ENCODE measurements at regions of chr13 and their contacts with region 1.

Region 1: DNA sequence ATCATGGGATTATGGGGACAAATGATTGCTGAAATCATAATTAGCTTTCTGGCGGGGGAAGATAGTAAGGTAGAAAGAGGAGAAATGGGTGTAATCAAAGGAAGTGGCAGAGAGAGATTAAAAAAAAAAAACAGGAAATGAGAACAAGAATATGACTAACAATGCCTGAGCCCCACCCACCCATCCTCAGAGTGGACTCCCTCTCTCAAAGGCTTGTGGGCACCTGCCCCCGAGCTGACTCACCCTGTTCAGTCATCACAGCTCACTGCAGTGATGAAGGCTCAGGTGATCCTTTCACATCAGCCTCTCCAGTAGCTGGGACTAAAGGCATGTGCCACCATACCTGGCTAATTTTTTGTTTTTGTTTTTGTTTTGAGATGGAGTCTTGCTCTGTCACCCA is 26.4 kb upstream of the TPT1 start:
- DNase-seq: peak; percentile 86
- H3K4me3 Mint-ChIP-seq: peak overlapping the region; percentile 64
- H3K27ac Mint-ChIP-seq: peak overlapping the region; percentile 91
- H3K4me1 Mint-ChIP-seq: peaks cover 55% of the 10 kb centered on the region
- H3K27me3 Mint-ChIP-seq: no peaks in the 10 kb centered on the region

Region 2: DNA sequence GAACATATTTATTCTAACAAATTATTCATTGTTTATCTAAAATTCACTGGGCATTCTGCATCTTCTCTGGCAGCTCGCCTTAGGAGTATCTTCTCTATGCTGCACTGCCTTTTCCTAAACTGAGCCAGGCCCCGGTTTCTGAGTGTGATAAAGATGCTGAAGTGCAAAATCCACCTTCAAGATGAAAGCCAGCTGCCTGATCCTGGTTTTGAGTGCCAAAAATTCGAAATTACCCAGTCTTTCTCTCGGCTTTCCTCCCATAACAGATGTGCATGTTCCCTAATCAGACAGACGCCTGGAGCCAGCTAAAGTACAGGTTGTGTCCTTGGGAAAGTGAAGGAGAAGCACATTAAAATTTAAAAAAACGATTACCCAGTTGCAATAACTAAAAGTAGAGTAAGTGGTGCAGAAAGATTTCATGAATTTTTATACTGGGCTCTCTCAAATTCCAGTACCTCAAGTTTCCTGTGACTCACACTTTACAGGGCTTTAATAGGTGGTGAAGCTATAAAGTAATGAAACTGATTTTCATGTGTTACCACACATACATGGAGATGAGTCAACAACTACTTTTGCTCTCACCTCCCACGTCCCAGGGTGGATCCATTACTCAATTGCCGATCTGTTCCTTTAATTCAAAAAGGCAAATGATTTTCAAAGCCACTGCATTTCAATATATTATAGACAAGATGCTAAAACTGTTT is 312.0 kb before region 1 on chr13:
- intact Hi-C with region 1: loop called (anchors 1 kb)
- DNase-seq: peak; percentile 3
- H3K4me3 Mint-ChIP-seq: no peak overlapping the region
- H3K27ac Mint-ChIP-seq: peak overlapping the region; percentile 4
- H3K4me1 Mint-ChIP-seq: peaks cover 20% of the 10 kb centered on the region
- H3K27me3 Mint-ChIP-seq: peaks cover 51% of the 10 kb centered on the region

Region 3: GRCh38 chr13:45206340-45206739 is 161.0 kb before region 1 on chr13:
- intact Hi-C with region 1: loop called (anchors 1 kb)
- DNase-seq: no peak
- H3K4me3 Mint-ChIP-seq: no peak overlapping the region
- H3K27ac Mint-ChIP-seq: peak overlapping the region; percentile 23
- H3K4me1 Mint-ChIP-seq: peaks cover 15% of the 10 kb centered on the region
- H3K27me3 Mint-ChIP-seq: no peaks in the 10 kb centered on the region

Region 4: GRCh38 chr13:45332036-45332830 is 35.1 kb before region 1 on chr13:
- intact Hi-C with region 1: loop called (anchors 5 kb)
- DNase-seq: no peak
- H3K4me3 Mint-ChIP-seq: no peak overlapping the region
- H3K27ac Mint-ChIP-seq: no peak overlapping the region
- H3K4me1 Mint-ChIP-seq: peaks cover 83% of the 10 kb centered on the region
- H3K27me3 Mint-ChIP-seq: no peaks in the 10 kb centered on the region

Region 5: DNA sequence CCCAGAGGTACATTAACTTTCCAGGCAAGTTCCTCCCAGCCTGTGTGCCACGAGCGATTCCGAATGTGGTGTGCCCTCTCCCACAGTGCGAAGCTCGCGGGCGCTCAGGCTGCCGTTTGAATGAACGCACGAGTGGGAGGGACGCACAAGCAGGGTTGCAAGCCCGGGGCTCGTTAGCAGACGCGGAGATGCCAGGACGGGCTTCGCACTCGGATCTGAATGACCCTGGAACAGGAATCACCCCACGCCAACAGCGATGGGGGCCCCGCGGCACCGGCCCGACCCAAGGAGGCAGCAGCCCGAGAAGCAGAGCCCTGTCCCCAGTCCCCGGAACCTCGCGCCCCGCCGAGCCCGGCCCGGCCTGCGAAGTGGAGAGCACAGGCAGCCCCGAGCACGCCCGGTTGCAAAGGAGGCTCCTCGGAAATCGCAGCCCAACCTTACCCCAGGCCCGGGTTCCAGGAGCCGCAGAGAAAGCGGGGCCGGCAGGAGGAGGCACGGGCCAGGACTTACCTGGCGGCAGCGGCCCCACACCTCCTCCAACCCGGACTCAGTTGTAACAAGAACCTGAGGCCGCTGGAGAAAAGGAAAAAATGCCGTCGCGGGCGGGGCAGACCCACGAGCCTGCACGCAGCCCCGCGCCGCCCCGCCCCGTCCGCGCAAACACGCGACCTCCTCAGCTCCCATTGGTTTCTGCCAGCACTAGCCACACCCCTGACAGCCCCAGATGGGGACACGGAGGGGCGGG is 50.6 kb after region 1 on chr13 and contains the start of gene SLC25A30:
- intact Hi-C with region 1: loop called (anchors 1 kb)
- DNase-seq: peak; percentile 85
- H3K4me3 Mint-ChIP-seq: peak within 1 kb of the TSS; percentile 94
- H3K27ac Mint-ChIP-seq: peak within 1 kb of the TSS; percentile 92
- H3K4me1 Mint-ChIP-seq: peaks cover 18% of the 10 kb centered on the region
- H3K27me3 Mint-ChIP-seq: no peaks in the 10 kb centered on the region
- total RNA-seq, gene SLC25A30: 16.0 and 16.3 TPM in 2 replicates

Region 6: DNA sequence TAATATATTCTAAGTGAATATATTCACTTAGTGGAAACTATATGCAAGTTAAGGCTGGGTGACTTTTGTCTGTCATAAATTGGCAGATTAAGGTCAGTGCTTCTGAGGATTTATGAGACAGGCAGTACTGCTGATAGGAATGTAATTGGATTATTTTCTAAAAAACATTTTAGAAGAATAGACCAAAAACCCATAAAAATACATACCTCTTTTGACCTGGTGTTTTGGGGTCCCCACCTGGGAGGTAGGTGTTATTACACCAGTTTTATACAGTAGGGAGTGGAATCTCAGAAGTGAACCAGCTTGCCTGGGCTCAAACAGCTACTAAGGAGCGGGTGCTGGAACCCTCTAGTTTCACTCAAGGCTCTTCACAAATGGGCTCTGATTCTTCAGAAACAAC is 122.7 kb after region 1 on chr13:
- intact Hi-C with region 1: loop called (anchors 5 kb)
- DNase-seq: no peak
- H3K4me3 Mint-ChIP-seq: no peak overlapping the region
- H3K27ac Mint-ChIP-seq: no peak overlapping the region
- H3K4me1 Mint-ChIP-seq: no peaks in the 10 kb centered on the region
- H3K27me3 Mint-ChIP-seq: no peaks in the 10 kb centered on the region

Measured in activated T-helper 1 cell treated with anti-CD3 and anti-CD28 coated beads, Interleukin-12 subunit alpha, Interleukin-12 subunit beta, Interleukin-2, Interleukin-4 antibody, amounts not matched to agents 30 ng/mL and 10 ng/mL and 1 ng/mL, durations not matched to agents 14 hours and 24 hours and 36 hours (primary cell).